HCT116 (cell line): ENCODE measurements at regions of chr9 and their contacts with region 1.

Region 1: DNA sequence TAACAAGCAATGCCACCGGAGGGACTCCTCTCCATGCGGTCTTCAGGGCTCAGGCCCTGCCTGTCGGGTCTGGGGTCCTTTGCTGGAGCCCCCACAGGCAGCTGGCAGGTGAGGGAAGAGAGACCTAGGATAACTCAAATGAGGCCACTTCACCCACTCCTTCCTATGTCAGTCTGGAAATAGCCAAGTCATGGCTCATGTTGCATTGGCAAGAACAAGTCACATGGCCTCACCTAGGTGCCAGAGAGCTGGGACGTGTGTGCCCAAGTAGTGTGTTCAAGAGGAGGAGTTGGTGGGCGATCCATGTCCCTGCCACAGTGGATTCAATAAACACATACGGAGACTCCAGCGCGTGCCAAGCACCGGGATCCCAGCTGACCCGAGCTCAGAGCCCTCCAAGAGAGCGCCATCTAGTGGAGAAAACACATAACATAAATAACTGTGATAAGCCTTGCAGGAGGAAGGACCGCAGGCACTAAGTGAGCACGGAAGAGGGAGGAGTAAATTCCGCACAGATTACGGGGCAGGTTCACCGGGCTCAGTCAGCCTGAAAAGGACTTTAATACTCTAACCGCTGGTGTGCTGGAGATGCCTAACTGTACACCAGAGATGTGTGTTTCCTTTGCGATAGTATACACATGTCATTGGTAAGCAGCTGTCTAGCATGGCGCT is 580.8 kb downstream of the CCDC171 start:
- DNase-seq: peak; percentile 70
- ATAC-seq: peak; percentile 97
- H3K4me3 ChIP-seq: no peak overlapping the region
- H3K27ac ChIP-seq: no peak overlapping the region
- H3K4me1 ChIP-seq: peaks cover 0 to 14% of the 10 kb centered on the region in 2 experiments; a peak in 2 of 4 replicates
- H3K27me3 ChIP-seq: no peaks in the 10 kb centered on the region
- CTCF ChIP-seq: peak; percentile 50 to 78 (median 54); a peak in 4 of 6 replicates
- POLR2A ChIP-seq: no peak
- RAD21 ChIP-seq: peak; percentile 64

Region 2: GRCh38 chr9:15837079-15837679 is 296.5 kb before region 1 on chr9:
- CTCF ChIA-PET with region 1: interaction called, 3 read pairs
- POLR2A ChIA-PET with region 1: no interaction called
- RAD21 ChIA-PET with region 1: interaction called in 1 of 2 experiments, 3 read pairs
- intact Hi-C with region 1: loop called (anchors 5 kb)
- DNase-seq: peak; percentile 36
- ATAC-seq: peak; percentile 84
- H3K4me3 ChIP-seq: no peak overlapping the region
- H3K27ac ChIP-seq: no peak overlapping the region
- H3K4me1 ChIP-seq: no peaks in the 10 kb centered on the region
- H3K27me3 ChIP-seq: no peaks in the 10 kb centered on the region
- CTCF ChIP-seq: peak; percentile 39 to 86 (median 67); a peak in 5 of 6 replicates
- POLR2A ChIP-seq: no peak
- RAD21 ChIP-seq: peak; percentile 52

Region 3: GRCh38 chr9:15873569-15874177 is 260.0 kb before region 1 on chr9:
- CTCF ChIA-PET with region 1: interaction called, 3 read pairs
- POLR2A ChIA-PET with region 1: no interaction called
- RAD21 ChIA-PET with region 1: no interaction called
- intact Hi-C with region 1: loop called (anchors 1 kb)
- DNase-seq: peak; percentile 24
- ATAC-seq: peak; percentile 58; the same call in 1 of the 2 replicates
- H3K4me3 ChIP-seq: no peak overlapping the region
- H3K27ac ChIP-seq: no peak overlapping the region
- H3K4me1 ChIP-seq: no peaks in the 10 kb centered on the region
- H3K27me3 ChIP-seq: no peaks in the 10 kb centered on the region
- CTCF ChIP-seq: peak; percentile 51 to 72 (median 52); a peak in 5 of 6 replicates
- POLR2A ChIP-seq: no peak
- RAD21 ChIP-seq: peak; percentile 71

Region 4: DNA sequence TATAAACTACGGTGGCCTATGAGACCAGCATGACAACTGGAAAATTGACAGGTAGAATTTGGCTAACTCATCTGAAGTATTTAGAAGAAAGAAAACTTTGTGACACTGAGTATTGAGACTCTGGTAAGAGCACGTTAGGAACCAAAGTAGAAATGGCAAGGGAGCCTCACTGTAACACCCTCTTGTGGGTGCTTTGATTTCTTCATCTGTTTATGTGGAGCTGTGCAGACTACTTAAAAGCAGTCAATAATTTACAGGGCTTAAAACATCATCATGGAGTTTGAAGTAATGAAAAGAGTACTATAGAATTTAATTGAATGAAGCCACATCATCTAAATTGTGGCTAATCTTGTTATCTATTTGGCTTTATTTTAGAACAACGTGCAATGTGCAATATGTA is 166.6 kb before region 1 on chr9:
- CTCF ChIA-PET with region 1: no interaction called
- POLR2A ChIA-PET with region 1: no interaction called
- RAD21 ChIA-PET with region 1: no interaction called
- intact Hi-C with region 1: no loop called
- DNase-seq: no peak
- ATAC-seq: no peak
- H3K4me3 ChIP-seq: no peak overlapping the region
- H3K27ac ChIP-seq: no peak overlapping the region
- H3K4me1 ChIP-seq: no peaks in the 10 kb centered on the region
- H3K27me3 ChIP-seq: no peaks in the 10 kb centered on the region
- CTCF ChIP-seq: no peak
- POLR2A ChIP-seq: no peak
- RAD21 ChIP-seq: no peak

Region 5: DNA sequence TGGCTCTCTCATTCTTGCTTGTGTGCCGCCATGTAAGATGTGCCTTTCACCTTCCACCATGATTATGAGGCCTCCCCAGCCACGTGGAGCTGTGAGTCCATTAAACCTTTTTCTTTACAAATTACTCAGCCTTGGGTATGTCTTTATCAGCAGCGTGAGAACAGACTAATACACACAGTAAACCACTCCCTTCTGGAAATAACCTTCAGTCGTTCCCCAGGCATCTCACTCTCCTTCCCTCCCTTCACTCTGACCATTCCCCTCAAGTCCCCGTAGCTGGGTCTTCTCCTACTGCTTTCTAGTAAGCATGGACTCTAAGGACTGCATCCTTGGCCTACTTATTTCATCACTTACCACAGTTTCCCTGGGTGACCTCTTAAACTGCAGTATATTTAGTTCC is 87.0 kb before region 1 on chr9:
- CTCF ChIA-PET with region 1: no interaction called
- POLR2A ChIA-PET with region 1: no interaction called
- RAD21 ChIA-PET with region 1: no interaction called
- intact Hi-C with region 1: loop called (anchors 5 kb)
- DNase-seq: no peak
- ATAC-seq: no peak
- H3K4me3 ChIP-seq: no peak overlapping the region
- H3K27ac ChIP-seq: no peak overlapping the region
- H3K4me1 ChIP-seq: no peaks in the 10 kb centered on the region
- H3K27me3 ChIP-seq: no peaks in the 10 kb centered on the region
- CTCF ChIP-seq: no peak
- POLR2A ChIP-seq: no peak
- RAD21 ChIP-seq: no peak